Activated CD4-positive, alpha-beta T cell treated with anti-CD3 and anti-CD28 coated beads, Interleukin-2, amount 10 ng/mL, durations not matched to agents 24 days and 14 days (primary cell): ENCODE measurements at regions of chr3 and their contacts with region 1.

Region 1: DNA sequence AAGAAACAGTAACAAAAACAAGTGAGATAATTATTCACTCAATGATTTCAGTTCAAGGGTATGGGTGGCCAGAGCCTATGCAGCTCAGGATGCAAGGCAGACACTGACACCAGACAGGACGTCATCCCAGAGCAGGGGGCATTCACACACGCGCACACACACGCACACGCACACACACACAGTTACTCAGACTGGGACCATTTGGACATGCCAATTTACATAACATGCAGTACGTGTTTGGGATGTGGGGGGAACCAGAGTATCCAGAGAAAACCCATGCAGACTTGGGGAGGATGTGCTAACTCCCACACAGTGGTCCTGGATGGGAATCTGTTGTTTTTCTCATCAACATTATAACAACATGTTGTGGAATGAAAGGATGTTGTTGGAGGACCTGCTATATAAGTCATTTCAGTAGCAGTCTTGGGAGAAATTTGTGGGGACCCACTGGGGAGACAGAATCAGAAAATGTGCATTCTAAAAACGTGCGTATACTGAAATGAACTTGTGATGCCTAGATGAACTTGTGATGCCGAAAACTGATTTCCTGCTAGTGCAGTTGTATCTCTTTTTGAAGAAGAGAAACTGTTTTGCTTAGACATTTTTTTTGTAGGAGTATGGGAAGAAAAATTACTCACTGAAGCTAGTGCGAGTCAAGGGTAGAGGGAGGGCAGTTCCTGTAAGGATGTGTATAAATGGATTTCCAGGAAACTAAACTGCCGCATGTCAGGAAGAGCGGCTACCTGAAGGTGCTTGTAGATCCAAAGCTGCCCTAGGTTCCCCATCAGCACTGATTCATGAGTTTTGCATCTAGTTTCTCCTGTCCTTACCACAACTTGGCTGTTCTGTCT is 25.2 kb downstream of the CD200 start:
- DNase-seq: peak; percentile 76
- H3K4me3 Mint-ChIP-seq: peak overlapping the region; percentile 79
- H3K27ac Mint-ChIP-seq: peak overlapping the region; percentile 93
- H3K4me1 Mint-ChIP-seq: peaks cover 35% of the 10 kb centered on the region
- H3K27me3 Mint-ChIP-seq: no peaks in the 10 kb centered on the region

Region 2: GRCh38 chr3:112338021-112338726 is 20.0 kb before region 1 on chr3:
- intact Hi-C with region 1: loop called (anchors 1 kb)
- DNase-seq: peak; percentile 51
- H3K4me3 Mint-ChIP-seq: peak overlapping the region; percentile 72
- H3K27ac Mint-ChIP-seq: peak overlapping the region; percentile 77
- H3K4me1 Mint-ChIP-seq: peaks cover 63% of the 10 kb centered on the region
- H3K27me3 Mint-ChIP-seq: no peaks in the 10 kb centered on the region

Region 3: DNA sequence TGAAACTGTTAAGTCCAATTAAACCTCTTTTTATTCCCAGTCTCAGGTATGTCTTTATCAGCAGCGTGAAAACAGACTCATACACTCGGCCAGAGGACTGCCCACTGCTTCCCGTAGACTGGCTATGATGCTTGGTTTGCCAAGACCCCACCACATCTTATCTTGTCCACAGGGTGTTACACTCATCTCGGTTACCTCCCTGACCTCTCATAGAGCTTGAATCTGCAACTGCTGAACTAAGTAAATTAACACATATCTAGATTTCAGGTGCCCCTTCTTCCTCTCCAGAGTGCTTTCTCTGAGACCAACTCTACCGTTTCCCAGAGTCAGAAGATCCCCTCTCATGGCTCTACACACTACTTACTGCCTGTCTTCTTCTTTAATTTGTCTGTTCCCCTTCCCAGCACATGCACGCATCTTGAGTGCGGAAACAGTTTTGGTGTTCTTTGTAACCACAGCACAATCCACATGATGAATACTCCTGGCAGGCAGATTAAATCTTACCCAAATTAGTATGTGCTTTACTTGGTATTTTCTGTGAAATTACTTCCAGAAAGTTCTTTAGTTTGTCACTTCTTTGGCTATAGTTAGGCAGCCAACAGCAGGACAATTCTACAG is 24.5 kb after region 1 on chr3:
- intact Hi-C with region 1: loop called (anchors 2 kb)
- DNase-seq: no peak
- H3K4me3 Mint-ChIP-seq: peak overlapping the region; percentile 1
- H3K27ac Mint-ChIP-seq: peak overlapping the region; percentile 74
- H3K4me1 Mint-ChIP-seq: peaks cover 28% of the 10 kb centered on the region
- H3K27me3 Mint-ChIP-seq: no peaks in the 10 kb centered on the region